ENCODE measurements at regions of chr19 and their contacts with region 1.

Region 1: GRCh38 chr19:40662921-40663694 is 27.3 kb downstream of the NUMBL start:
- DNase-seq: peak; percentile 63
- ATAC-seq: peak; percentile 96
- H3K4me3 ChIP-seq: peak overlapping the region; percentile 64 to 77 (median 65)
- H3K27ac ChIP-seq: no peak overlapping the region
- H3K4me1 ChIP-seq: peaks cover 11% of the 10 kb centered on the region
- H3K27me3 ChIP-seq: peaks cover 3 to 22% of the 10 kb centered on the region in 2 experiments; a peak in 2 of 5 replicates
- CTCF ChIP-seq: peak; percentile 97
- EP300 ChIP-seq: no peak
- POLR2A ChIP-seq: no peak
- RAD21 ChIP-seq: peak; percentile 98

Region 2: DNA sequence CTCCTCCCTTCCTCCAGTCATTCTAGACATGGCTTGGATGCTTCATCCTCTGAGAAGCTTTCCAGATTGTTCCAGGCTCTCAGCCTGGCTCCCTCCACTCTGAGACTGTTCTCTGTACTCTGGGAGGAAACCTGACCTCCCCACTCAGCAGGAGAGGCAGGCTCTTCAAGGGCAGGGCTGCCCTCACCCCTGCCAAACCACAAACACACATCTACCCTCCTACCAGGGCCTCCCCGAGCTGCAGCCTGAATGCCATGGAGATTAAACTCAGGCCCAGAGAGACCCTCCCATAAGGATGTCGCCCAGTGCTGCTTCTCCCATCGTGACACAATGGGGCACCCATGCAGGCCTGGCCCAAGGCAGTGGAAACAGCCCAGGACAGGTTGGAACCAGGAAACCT is 11.2 kb after region 1 on chr19:
- CTCF ChIA-PET with region 1: no interaction called
- POLR2A ChIA-PET with region 1: no interaction called
- in situ Hi-C with region 1: no loop called
- intact Hi-C with region 1: no loop called
- DNase-seq: no peak
- ATAC-seq: no peak
- H3K4me3 ChIP-seq: no peak overlapping the region
- H3K27ac ChIP-seq: no peak overlapping the region
- H3K4me1 ChIP-seq: no peaks in the 10 kb centered on the region
- H3K27me3 ChIP-seq: no peaks in the 10 kb centered on the region
- CTCF ChIP-seq: no peak
- EP300 ChIP-seq: no peak
- POLR2A ChIP-seq: no peak
- RAD21 ChIP-seq: no peak

Region 3: DNA sequence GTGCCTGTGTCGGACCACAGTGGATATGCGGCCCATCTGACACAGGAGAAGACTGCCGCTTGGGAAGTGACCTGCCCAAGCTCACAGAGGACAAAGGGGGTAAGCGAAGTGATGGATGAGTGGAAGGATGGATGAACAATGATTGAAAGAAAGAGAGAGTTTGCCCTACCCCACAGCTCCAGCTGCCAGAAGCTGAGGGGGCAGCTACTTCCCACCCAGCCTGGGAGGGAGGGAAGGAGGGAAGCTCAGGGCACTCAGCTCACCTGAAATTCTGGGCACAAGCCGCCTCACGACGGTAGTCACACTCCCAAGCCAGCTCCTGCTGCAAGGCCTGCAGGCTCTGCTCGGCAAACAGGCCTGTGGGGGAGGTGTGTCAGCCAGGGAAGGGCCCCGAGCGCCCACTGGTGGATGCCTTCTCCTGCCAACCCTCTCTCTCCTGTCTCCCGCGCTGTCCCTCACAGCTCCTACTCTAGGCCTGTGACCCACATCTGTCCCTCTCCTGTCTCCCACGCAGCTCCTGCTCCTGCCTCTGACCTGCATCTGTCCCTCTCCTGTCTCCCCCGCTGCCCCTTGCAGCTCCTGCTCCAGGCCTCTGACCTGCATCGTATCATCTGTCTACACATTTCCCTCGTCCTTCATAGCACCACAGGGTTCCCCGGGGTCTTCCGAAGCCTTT is 39.4 kb after region 1 on chr19:
- CTCF ChIA-PET with region 1: interaction called, 19 read pairs
- POLR2A ChIA-PET with region 1: interaction called, 4 read pairs
- in situ Hi-C with region 1: loop called (anchors 5 kb)
- intact Hi-C with region 1: loop called (anchors 1 kb)
- DNase-seq: peak; percentile 50
- ATAC-seq: peak; percentile 98
- H3K4me3 ChIP-seq: no peak overlapping the region
- H3K27ac ChIP-seq: no peak overlapping the region
- H3K4me1 ChIP-seq: peaks cover 7% of the 10 kb centered on the region; the same call in 1 of the 2 replicates
- H3K27me3 ChIP-seq: no peaks in the 10 kb centered on the region
- CTCF ChIP-seq: peak; percentile 80
- EP300 ChIP-seq: no peak
- POLR2A ChIP-seq: no peak
- RAD21 ChIP-seq: peak; percentile 80

Region 4: DNA sequence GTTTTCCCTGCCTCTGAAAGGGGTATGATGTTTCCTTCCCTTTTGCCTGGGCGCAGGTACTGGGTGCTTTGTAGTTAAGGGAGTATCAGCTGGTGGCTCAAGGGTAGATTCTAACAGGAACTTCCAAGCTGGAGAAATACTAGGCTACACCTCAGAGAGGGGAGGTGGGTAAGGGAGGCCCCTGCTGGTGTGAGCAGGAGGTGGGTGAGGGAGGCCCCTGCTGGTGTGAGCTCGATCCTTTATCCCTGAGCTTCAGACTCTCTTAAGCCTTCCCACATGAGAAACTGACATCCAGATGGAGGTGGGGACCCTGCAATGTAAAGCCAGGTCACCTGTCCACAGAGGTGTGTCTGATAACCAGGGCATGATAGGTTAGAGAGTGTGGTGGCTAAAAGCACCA is 360.1 kb after region 1 on chr19:
- CTCF ChIA-PET with region 1: no interaction called
- POLR2A ChIA-PET with region 1: no interaction called
- in situ Hi-C with region 1: no loop called
- intact Hi-C with region 1: loop called (anchors 10 kb)
- DNase-seq: no peak
- ATAC-seq: peak; percentile 55
- H3K4me3 ChIP-seq: no peak overlapping the region
- H3K27ac ChIP-seq: no peak overlapping the region
- H3K4me1 ChIP-seq: no peaks in the 10 kb centered on the region
- H3K27me3 ChIP-seq: peaks cover 1 to 22% of the 10 kb centered on the region in 2 experiments; a peak in 2 of 5 replicates
- CTCF ChIP-seq: peak; percentile 27; the same call in 1 of the 2 replicates
- EP300 ChIP-seq: no peak
- POLR2A ChIP-seq: no peak
- RAD21 ChIP-seq: no peak

Region 5: DNA sequence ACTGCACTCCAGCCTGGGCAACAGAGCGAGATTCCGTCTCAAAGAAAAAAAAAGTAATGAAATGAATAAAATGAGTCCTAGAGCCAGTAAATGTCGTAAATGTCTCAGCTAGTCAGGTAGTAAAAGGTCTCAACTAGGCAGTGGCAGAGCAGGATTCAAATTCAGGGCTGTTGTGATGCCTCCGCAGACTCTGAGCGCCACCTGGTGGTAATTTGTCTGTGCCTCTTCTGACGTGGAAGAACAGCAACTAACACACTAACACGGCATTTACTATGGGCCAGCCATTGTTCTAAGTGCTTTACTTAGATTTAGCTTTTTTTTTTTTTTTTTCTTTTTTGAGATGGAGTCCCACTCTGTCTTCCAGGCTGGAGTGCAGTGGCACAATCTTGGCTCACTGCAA is 481.3 kb after region 1 on chr19:
- CTCF ChIA-PET with region 1: interaction called, 5 read pairs
- POLR2A ChIA-PET with region 1: no interaction called
- in situ Hi-C with region 1: loop called (anchors 25 kb)
- intact Hi-C with region 1: loop called (anchors 5 kb)
- DNase-seq: peak; percentile 68
- ATAC-seq: peak; percentile 78
- H3K4me3 ChIP-seq: no peak overlapping the region
- H3K27ac ChIP-seq: no peak overlapping the region
- H3K4me1 ChIP-seq: no peaks in the 10 kb centered on the region
- H3K27me3 ChIP-seq: no peaks in the 10 kb centered on the region; a peak in 2 of 5 replicates
- CTCF ChIP-seq: peak; percentile 90
- EP300 ChIP-seq: no peak
- POLR2A ChIP-seq: no peak
- RAD21 ChIP-seq: peak; percentile 76

Measured in HepG2 (cell line).